T-cell (primary cell): ENCODE measurements at regions of chrX and their contacts with region 1.

Region 1: DNA sequence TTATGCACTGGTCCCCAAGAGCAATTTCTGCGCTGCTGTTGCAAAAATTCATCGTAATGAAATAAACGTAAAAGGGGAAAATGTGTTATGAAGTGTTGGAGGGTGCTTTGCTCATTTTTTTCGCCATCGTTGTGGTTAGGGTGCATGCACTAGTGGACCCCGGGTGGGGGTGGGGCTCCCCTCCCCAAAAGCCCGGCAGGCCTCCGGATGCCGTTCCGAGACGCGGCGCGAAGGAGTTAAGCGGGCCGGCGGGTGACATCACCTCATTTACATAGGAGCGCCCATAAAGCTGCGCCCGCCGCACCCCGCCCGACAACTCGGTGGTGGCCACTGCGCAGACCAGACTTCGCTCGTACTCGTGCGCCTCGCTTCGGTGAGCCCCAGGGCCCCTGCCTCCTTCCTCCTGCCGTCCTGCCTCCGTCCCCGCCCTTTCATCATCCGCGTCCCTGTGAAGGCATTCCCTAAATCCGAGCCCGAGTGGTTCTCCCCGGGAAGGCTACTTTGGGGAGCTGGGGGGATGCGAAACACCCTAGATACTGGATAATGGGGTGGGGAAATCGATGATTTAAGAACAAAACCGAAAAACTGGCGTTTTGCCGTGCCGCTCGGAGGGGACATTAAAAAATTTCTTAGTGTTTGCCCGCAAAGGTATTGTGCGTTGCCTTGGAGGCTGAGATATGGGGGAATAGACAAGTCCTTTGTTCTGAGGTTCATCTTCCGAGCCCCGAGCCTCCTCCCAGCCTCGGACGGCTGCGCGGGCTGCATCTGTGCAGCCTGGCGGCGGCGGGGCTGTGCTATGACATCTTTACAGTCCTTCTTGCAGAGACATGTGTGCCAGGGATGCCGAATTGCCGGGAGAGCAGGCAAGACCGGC is at the start of gene TMSB4X:
- DNase-seq: peak; percentile 60 to 85 (median 78)
- ATAC-seq: peak; percentile 52 to 59 (median 55)
- H3K4me3 ChIP-seq: peak within 1 kb of the TSS; percentile 90 to 98
- H3K4me3 Mint-ChIP-seq: peak within 1 kb of the TSS; percentile 79 to 97 (median 94)
- H3K27ac ChIP-seq: peak within 1 kb of the TSS; percentile 94
- H3K27ac Mint-ChIP-seq: peak within 1 kb of the TSS; percentile 93 to 98
- H3K4me1 ChIP-seq: peaks cover 26% of the 10 kb centered on the region in 2 experiments
- H3K4me1 Mint-ChIP-seq: peaks cover 34 to 76% (median 43%) of the 10 kb centered on the region in 3 donors
- H3K27me3 ChIP-seq: no peaks in the 10 kb centered on the region
- H3K27me3 Mint-ChIP-seq: peaks cover 0 to 4% of the 10 kb centered on the region in 2 donors
- total RNA-seq, gene TMSB4X: 5,030 to 6,201 (median 5,880) TPM

Region 2: DNA sequence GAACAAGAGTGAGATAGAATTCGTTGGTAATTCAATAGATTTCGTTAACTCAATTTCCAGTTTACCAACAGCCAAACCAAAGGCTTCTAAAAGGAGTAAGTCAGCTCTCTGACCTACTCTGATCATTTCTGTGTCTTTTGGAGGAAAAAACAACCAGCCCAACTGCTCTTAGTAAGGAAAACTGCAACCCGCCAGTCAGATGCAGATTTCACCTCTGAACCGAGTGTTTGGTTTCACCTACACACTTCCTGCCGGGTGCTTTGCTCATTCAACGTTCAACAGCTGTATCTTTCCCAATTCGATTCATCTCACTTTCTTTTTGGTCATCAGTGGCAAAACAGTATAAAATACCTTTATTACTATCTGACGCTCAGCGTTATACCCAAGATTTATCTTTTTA is 24.4 kb after region 1 on chrX:
- CTCF ChIA-PET with region 1: interaction called in 1 of 2 experiments, 6 read pairs
- POLR2A ChIA-PET with region 1: interaction called, 4 to 12 read pairs
- DNase-seq: peak in 25 of 35 experiments; percentile 14 to 70 (median 36)
- ATAC-seq: peak; percentile 57 to 82 (median 62)
- H3K4me3 ChIP-seq: peak overlapping the region; percentile 24 to 47
- H3K4me3 Mint-ChIP-seq: peak overlapping the region; percentile 64 to 74 (median 71)
- H3K27ac ChIP-seq: peak overlapping the region; percentile 94
- H3K27ac Mint-ChIP-seq: peak overlapping the region; percentile 83 to 98
- H3K4me1 ChIP-seq: peaks cover 44 to 53% of the 10 kb centered on the region in 2 experiments
- H3K4me1 Mint-ChIP-seq: peaks cover 60 to 76% (median 70%) of the 10 kb centered on the region in 3 donors
- H3K27me3 ChIP-seq: no peaks in the 10 kb centered on the region
- H3K27me3 Mint-ChIP-seq: peaks cover 0 to 10% of the 10 kb centered on the region in 2 donors

Region 3: DNA sequence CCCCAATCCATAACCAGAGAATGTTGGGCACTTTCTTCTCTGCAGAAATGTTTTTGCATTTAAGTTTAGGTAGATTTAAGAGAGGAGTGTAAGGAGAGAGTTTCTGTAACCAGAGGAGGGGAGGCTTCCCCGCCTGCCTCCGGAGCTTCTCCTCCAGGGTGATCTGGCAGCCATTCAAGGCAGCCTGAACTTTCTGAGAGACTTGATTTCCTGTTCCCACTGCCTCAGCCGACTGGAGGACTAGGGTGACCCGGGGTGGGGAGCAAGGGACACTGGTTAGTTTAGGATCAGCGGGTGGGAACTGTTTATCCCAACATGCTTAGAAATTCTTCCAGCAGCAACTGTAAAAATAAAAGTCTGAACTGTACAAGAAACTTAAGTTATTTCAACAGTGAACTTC is 54.3 kb after region 1 on chrX:
- CTCF ChIA-PET with region 1: interaction called in 1 of 2 experiments, 4 read pairs
- POLR2A ChIA-PET with region 1: interaction called, 9 to 10 read pairs
- DNase-seq: peak in 11 of 35 experiments; percentile 4 to 43 (median 10)
- ATAC-seq: peak in 3 of 4 experiments; percentile 41 to 46 (median 45)
- H3K4me3 ChIP-seq: no peak overlapping the region
- H3K4me3 Mint-ChIP-seq: peak overlapping the region in 2 of 3 donors; percentile 6 to 64
- H3K27ac ChIP-seq: peak overlapping the region; percentile 67
- H3K27ac Mint-ChIP-seq: peak overlapping the region; percentile 94 to 99
- H3K4me1 ChIP-seq: peaks cover 49 to 51% of the 10 kb centered on the region in 2 experiments
- H3K4me1 Mint-ChIP-seq: peaks cover 71 to 81% (median 75%) of the 10 kb centered on the region in 3 donors
- H3K27me3 ChIP-seq: no peaks in the 10 kb centered on the region
- H3K27me3 Mint-ChIP-seq: peaks cover 0 to 46% of the 10 kb centered on the region in 2 donors

Region 4: DNA sequence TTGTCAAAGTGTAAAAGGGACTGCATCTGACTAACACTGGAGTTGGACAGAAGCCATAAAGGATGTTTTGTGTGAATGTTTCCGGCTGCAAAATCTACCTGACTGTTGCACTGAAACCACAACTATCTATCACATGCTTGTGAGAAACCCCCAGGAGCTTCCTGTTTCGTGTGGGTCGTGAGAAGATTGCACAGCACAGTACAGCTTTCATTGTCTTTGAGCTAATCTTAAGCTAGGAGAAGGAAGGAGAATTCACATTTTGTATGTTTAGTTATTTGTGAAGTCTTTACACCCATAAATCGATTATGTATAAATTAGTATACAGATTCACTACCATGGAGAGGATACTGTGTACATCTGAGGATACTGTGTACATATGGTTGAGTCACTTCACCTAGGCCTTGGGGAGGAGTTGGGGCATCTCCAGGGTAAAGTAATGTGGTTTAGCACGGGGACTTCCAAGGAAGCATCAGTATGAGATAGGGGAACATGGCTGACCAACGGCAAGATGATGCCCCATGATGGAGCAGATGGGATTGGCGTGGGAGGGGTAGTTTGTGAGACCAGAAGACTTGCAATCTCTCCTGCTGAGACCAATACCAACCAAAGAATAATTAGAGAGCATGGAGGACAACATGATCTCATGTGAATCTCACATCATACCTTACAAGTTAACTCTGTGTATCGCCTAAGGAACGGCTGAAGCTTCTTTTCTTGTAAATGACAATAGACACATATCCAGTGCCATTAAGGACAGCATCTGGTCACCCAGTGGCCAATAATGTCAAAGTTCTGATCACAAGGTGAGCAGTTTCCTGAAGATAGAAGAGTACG is 112.5 kb after region 1 on chrX:
- CTCF ChIA-PET with region 1: interaction called, 8 to 21 read pairs
- POLR2A ChIA-PET with region 1: interaction called, 8 to 29 read pairs
- DNase-seq: peak in 34 of 35 experiments; percentile 30 to 91 (median 64)
- ATAC-seq: peak; percentile 69 to 81 (median 75)
- H3K4me3 ChIP-seq: peak overlapping the region in 1 of 2 donors; percentile 19
- H3K4me3 Mint-ChIP-seq: peak overlapping the region; percentile 77 to 85 (median 80)
- H3K27ac ChIP-seq: peak overlapping the region; percentile 100
- H3K27ac Mint-ChIP-seq: peak overlapping the region; percentile 89 to 99
- H3K4me1 ChIP-seq: peaks cover 49 to 74% of the 10 kb centered on the region in 2 experiments
- H3K4me1 Mint-ChIP-seq: peaks cover 92 to 95% (median 94%) of the 10 kb centered on the region in 3 donors
- H3K27me3 ChIP-seq: no peaks in the 10 kb centered on the region
- H3K27me3 Mint-ChIP-seq: peaks cover 0 to 4% of the 10 kb centered on the region in 2 donors

Region 5: DNA sequence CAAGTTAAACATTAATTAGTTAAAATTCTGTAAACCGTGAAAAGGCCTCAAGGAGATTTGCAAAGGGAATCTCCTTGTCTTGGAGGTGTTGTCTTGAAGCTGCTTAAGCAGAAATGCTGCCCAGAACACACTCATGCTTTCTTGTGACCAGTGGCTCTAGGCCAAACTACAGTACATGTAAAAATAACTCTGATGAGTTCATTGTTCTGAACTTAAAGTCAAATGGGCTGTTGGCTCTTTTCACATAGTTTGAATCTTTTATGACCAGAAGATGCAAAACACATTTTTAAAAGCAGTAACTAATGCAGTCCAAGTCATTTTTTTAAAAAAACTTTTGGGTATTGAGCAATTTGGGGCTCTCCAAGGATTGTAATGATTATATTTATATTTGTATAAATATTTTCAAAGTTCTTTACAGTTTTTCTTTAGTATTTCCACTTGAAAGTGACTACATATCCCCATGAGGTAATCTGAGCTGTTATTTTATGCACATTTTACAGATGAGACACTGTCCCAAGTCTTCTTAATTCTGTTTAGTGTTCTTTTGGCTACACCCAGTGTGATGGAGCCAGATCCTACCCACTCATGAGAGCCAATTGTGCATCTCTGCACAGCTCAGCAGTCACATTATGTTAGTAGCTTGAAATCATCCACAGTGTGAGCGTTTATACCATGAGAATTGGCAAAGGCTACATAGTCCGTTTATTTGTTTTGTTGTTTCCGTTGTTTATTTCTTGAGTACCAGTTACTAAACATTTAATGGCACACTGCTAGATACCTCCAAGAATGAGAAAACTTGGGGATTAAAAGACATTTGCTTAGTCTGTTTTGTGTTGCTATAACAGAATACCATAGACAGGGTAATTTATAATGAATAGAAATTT is 457.6 kb after region 1 on chrX:
- CTCF ChIA-PET with region 1: no interaction called
- POLR2A ChIA-PET with region 1: no interaction called
- DNase-seq: no peak
- ATAC-seq: no peak
- H3K4me3 ChIP-seq: no peak overlapping the region
- H3K4me3 Mint-ChIP-seq: no peak overlapping the region
- H3K27ac ChIP-seq: no peak overlapping the region
- H3K27ac Mint-ChIP-seq: no peak overlapping the region
- H3K4me1 ChIP-seq: no peaks in the 10 kb centered on the region
- H3K4me1 Mint-ChIP-seq: peaks cover 10 to 12% (median 10%) of the 10 kb centered on the region in 3 donors
- H3K27me3 ChIP-seq: no peaks in the 10 kb centered on the region
- H3K27me3 Mint-ChIP-seq: peaks cover 0 to 27% of the 10 kb centered on the region in 2 donors